ENCODE measurements at regions of chr5 and their contacts with region 1.

Region 1: GRCh38 chr5:73298772-73299630 is 126.0 kb downstream of the TMEM174 start:
- DNase-seq: peak; percentile 78
- H3K4me3 ChIP-seq: peak overlapping the region; percentile 55
- H3K27ac ChIP-seq: peak overlapping the region; percentile 65
- H3K27me3 ChIP-seq: peaks cover 9% of the 10 kb centered on the region
- CTCF ChIP-seq: no peak

Region 2: DNA sequence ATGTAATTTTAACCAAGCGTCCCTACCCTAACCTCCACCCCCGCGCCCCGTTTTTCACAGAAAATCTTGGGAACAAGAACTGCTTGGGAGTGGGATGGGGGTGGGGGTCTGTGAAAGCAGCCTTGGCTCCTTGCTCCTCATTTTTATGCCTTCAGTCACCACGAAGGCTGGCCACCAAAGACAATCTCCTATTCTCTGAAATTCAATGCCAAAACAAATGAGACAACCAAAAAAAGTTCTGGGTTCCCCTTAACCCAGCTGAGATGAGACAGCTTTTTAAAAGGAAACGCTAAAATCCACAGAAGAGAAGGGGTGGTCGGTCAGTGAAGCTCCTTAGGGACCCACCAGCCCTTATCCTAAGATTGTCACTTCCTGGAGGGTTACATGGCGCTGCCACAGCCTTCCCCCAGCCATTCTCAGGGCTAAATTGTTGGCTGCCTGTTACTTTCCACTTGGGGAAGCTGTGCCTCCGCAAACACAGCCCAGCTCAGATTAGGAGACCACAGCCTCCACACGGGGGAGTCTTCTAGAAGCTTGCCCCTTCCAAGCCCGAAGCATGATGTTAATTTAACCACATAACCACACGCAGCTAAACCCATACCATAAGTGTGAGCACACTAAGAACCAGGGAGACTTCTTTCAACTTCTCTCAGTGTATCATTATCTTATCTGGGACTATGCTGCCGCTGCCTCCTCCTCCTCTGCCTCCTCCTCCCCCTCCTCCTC is 13.3 kb after region 1 on chr5:
- CTCF ChIA-PET with region 1: interaction called, 7 read pairs
- POLR2A ChIA-PET with region 1: interaction called, 16 read pairs
- DNase-seq: peak; percentile 89
- H3K4me3 ChIP-seq: no peak overlapping the region
- H3K27ac ChIP-seq: peak overlapping the region; percentile 81
- H3K27me3 ChIP-seq: no peaks in the 10 kb centered on the region
- CTCF ChIP-seq: peak; percentile 71

Measured in AG04450 (cell line).